Mammary epithelial cell (primary cell): ENCODE measurements at regions of chr16 and their contacts with region 1.

Region 1: DNA sequence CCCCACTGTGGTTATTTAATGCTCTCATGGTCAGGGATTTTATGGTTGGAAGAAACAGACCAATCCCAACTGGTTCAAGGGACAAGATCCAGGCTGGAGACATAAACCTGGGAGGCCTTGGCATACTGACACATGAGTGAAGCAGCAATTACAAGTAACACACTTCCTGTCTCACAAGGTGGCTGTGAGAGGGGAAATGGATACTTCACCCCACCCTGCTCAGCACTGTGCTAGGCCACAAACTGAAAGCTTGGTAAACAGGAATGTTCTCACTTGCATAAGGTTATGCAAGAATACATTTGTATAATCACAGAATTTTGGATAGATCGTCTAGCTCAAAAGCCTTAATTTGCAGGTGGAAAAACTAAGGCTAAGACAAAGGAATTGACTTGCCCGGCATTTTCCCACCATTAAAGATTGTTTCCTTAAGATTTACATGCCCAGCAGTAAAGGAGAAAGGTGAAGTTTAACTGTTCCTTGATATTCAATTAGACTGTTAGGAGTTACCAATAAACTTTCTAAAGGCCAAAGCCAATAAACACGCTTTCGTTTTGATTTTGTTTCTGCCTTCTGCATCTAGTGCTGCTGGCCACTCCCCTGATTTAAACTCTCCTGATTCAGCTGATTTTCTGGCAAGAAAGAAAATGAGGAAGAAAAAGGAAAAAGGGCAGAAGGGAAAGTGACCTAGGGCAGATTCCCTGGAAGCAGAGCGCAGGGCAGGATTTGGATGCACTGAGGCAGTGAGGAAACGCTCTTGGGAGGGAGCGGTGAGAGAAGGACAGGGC is 215.6 kb upstream of the CDH5 start:
- DNase-seq: no peak
- H3K4me3 ChIP-seq: no peak overlapping the region
- H3K27ac ChIP-seq: no peak overlapping the region
- H3K4me1 ChIP-seq: peaks cover 3% of the 10 kb centered on the region
- H3K27me3 ChIP-seq: no peaks in the 10 kb centered on the region
- CTCF ChIP-seq: no peak

Region 2: GRCh38 chr16:66091471-66091891 is 59.4 kb before region 1 on chr16:
- CTCF ChIA-PET with region 1: no interaction called
- dilution Hi-C with region 1: loop called (anchors 10 kb)
- in situ Hi-C with region 1: no loop called
- intact Hi-C with region 1: no loop called
- DNase-seq: no peak
- H3K4me3 ChIP-seq: no peak overlapping the region
- H3K27ac ChIP-seq: no peak overlapping the region
- H3K4me1 ChIP-seq: no peaks in the 10 kb centered on the region
- H3K27me3 ChIP-seq: no peaks in the 10 kb centered on the region
- CTCF ChIP-seq: no peak